AG04450 (cell line): ENCODE measurements at regions of chr22 and their contacts with region 1.

Region 1: DNA sequence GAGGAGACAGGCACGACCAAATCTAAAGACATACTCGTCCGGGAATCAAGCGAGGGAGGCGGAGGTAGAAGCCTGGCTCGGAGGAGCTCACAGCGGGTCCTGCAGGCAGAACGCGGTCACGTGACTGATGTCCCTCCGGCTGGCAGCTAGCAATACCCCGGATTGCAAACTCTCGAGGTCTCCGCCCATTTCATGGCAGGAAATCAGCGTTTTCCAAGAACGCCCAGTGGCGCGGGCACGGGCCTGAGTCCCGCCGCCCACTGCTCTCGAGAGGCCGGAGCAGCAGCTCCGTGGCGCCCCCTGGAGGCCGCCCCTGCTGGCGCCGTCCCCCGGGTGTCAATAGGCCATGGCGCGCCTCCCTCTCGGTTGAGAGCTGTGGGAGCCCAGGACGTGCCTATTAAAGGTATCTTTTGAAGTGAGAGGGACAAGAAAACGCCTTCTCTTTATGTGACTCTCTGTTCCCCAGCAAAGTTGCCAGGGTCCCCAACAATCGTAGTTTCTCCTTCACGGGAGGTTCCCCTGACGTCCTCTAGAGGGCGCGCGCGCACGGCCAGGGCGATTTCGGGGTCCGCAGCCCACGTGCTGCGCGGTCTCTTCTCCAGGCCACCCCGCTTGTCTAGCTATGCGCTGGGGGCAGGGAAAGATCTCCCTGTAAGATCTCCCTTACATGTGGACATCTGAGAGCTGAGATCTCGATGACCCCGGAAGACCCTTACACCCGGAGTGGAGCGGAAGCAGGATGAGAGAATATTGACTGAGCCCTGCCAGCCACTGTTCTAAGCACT is 37.3 kb upstream of the RBFOX2 start:
- DNase-seq: peak; percentile 87
- H3K4me3 ChIP-seq: peak overlapping the region; percentile 65
- H3K27ac ChIP-seq: peak overlapping the region; percentile 78
- H3K27me3 ChIP-seq: no peaks in the 10 kb centered on the region
- CTCF ChIP-seq: peak; percentile 96

Region 2: GRCh38 chr22:35795476-35795875 is 270.5 kb before region 1 on chr22:
- CTCF ChIA-PET with region 1: interaction called, 16 read pairs
- POLR2A ChIA-PET with region 1: no interaction called
- DNase-seq: no peak
- H3K4me3 ChIP-seq: no peak overlapping the region
- H3K27ac ChIP-seq: no peak overlapping the region
- H3K27me3 ChIP-seq: no peaks in the 10 kb centered on the region
- CTCF ChIP-seq: no peak

Region 3: DNA sequence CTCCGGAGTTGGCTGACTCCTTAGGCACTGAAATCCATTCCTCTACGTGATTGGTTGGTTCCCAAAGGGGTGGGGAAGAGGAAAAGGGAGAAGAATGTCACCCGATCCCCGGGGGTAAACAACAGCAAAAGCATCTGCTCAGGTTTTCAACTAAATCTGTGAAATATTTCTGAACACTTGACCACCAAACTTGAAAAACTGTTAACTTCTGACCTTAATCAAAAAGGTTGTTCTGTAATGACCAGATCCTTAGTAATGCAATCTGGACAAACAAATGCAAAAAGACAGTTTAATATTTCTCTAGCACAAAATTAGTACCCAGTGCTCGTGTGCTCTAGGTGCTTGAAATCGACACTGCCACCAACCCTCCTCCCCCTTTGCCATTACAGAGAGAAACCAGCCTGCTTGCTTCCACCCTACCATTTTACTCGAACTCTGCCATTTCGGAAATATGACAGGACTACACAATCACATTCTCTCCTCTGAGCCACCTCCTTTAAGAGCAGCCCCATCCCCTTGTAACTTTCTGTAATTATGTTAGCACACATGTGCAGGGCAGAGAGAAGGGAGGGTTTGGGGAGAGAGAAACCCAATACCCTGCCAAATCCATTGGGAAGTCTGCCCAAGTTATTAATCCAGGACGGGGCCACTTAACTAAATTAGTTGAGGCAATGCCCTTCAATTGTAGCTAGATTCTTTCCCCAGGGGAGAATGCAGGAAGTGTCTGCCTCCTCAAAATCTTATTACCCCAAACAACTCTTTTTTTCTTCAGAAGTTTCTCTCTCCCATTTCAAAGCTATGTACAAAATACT is 151.1 kb before region 1 on chr22:
- CTCF ChIA-PET with region 1: interaction called, 38 read pairs
- POLR2A ChIA-PET with region 1: no interaction called
- DNase-seq: peak; percentile 75
- H3K4me3 ChIP-seq: peak overlapping the region; percentile 61
- H3K27ac ChIP-seq: peak overlapping the region; percentile 47
- H3K27me3 ChIP-seq: no peaks in the 10 kb centered on the region
- CTCF ChIP-seq: no peak

Region 4: GRCh38 chr22:35961480-35962295 is 104.3 kb before region 1 on chr22:
- CTCF ChIA-PET with region 1: interaction called, 19 read pairs
- POLR2A ChIA-PET with region 1: no interaction called
- DNase-seq: peak; percentile 55
- H3K4me3 ChIP-seq: peak overlapping the region; percentile 17
- H3K27ac ChIP-seq: peak overlapping the region; percentile 59
- H3K27me3 ChIP-seq: no peaks in the 10 kb centered on the region
- CTCF ChIP-seq: no peak

Region 5: DNA sequence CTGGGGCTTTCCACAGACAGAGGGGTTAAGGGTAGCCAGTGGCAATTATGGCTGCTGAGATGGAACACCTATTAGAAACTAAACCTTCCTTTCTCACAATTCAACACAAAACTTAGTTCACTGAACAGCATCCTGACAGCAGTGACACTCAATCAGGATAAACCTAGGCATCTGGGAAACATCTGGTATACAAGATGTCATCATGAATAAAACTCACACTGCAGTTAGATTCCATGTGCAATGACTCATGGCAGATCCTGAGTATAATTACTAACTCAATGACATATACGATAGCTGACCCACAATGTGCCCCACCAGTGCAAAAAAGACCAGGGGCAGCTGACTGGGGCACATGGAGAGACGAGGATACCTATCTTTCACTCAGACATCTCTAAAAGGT is 55.1 kb before region 1 on chr22:
- CTCF ChIA-PET with region 1: interaction called, 18 read pairs
- POLR2A ChIA-PET with region 1: no interaction called
- DNase-seq: peak; percentile 55
- H3K4me3 ChIP-seq: no peak overlapping the region
- H3K27ac ChIP-seq: peak overlapping the region; percentile 49
- H3K27me3 ChIP-seq: no peaks in the 10 kb centered on the region
- CTCF ChIP-seq: no peak

Region 6: DNA sequence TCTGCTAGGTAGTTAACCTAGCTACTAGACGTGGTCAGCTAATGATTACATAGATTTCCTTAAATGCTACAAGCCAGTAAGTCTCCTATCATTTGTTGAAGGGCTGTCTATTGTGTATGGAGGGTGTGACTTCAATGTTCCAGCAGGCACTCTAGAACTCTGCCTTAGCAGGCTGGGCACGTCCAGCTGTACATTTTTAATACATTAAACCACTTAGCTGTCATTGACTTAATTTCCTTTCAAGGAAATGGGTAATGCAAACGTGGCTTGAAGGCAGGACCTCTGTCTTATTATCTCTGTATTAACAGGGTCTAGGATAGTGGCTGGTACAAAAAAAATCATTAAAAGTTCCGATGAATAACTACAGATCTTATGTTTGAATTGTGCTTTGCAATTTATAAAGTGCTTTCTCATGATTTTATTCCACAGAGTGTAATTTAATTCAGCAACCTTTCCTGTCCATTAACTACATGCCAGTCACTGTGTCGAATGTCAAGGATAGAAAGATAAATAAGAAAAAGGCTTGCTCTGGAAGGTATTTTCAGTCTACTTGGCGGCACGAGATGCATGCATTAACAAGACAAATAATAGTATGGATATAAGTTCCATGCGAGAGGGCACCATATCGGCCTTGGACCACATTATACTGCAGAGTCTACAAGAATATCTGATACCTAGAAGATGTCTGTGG is 34.3 kb after region 1 on chr22:
- CTCF ChIA-PET with region 1: interaction called, 12 read pairs
- POLR2A ChIA-PET with region 1: no interaction called
- DNase-seq: no peak
- H3K4me3 ChIP-seq: no peak overlapping the region
- H3K27ac ChIP-seq: no peak overlapping the region
- H3K27me3 ChIP-seq: peaks cover 2% of the 10 kb centered on the region
- CTCF ChIP-seq: no peak